Activated CD4-positive, alpha-beta memory T cell treated with anti-CD3 and anti-CD28 coated beads for 36 hours (primary cell): ENCODE measurements at regions of chr18 and their contacts with region 1.

Region 1: GRCh38 chr18:47756364-47757016 is 174.0 kb downstream of the SMAD2 start:
- DNase-seq: peak; percentile 67
- H3K4me3 Mint-ChIP-seq: no peak overlapping the region
- H3K27ac Mint-ChIP-seq: no peak overlapping the region
- H3K4me1 Mint-ChIP-seq: peaks cover 4% of the 10 kb centered on the region
- H3K27me3 Mint-ChIP-seq: peaks cover 29% of the 10 kb centered on the region

Region 2: GRCh38 chr18:47100214-47100831 is 656.2 kb before region 1 on chr18:
- CTCF ChIA-PET with region 1: no interaction called
- POLR2A ChIA-PET with region 1: no interaction called
- intact Hi-C with region 1: loop called (anchors 10 kb)
- DNase-seq: peak; percentile 75
- H3K4me3 Mint-ChIP-seq: no peak overlapping the region
- H3K27ac Mint-ChIP-seq: no peak overlapping the region
- H3K4me1 Mint-ChIP-seq: no peaks in the 10 kb centered on the region
- H3K27me3 Mint-ChIP-seq: no peaks in the 10 kb centered on the region

Region 3: DNA sequence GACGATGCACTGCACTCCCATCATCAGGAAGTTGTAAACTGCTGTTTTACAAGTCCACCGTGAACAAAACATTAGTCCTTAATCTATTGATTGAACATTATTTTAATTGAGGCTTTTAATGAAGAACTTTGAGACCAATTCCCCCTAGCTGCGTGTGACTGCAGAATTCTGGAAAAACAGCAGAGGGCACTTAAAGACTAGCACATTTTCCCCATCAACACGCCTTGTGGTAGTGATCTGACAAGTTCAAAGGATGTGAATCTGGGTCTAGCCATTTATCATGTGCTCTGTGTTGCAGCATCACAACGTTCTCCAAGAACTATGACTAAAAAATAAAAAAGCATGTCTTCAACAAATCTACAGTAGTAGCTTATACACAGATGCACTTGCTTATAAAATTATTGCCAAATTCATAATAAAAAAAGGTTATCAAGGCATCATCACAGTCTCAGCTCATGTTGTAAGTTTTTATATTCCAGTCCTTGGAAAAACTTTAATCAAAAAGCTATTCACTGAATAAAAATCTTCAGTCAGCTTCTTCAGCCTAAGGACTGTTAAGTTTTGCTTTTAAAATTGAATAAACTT is 540.8 kb before region 1 on chr18:
- CTCF ChIA-PET with region 1: interaction called, 13 read pairs
- POLR2A ChIA-PET with region 1: no interaction called
- intact Hi-C with region 1: no loop called
- DNase-seq: peak; percentile 26
- H3K4me3 Mint-ChIP-seq: no peak overlapping the region
- H3K27ac Mint-ChIP-seq: no peak overlapping the region
- H3K4me1 Mint-ChIP-seq: no peaks in the 10 kb centered on the region
- H3K27me3 Mint-ChIP-seq: peaks cover 27% of the 10 kb centered on the region

Region 4: GRCh38 chr18:47595815-47596496 is 160.5 kb before region 1 on chr18:
- CTCF ChIA-PET with region 1: no interaction called
- POLR2A ChIA-PET with region 1: no interaction called
- intact Hi-C with region 1: loop called (anchors 1 kb)
- DNase-seq: peak; percentile 26
- H3K4me3 Mint-ChIP-seq: no peak overlapping the region
- H3K27ac Mint-ChIP-seq: no peak overlapping the region
- H3K4me1 Mint-ChIP-seq: no peaks in the 10 kb centered on the region
- H3K27me3 Mint-ChIP-seq: peaks cover 8% of the 10 kb centered on the region

Region 5: DNA sequence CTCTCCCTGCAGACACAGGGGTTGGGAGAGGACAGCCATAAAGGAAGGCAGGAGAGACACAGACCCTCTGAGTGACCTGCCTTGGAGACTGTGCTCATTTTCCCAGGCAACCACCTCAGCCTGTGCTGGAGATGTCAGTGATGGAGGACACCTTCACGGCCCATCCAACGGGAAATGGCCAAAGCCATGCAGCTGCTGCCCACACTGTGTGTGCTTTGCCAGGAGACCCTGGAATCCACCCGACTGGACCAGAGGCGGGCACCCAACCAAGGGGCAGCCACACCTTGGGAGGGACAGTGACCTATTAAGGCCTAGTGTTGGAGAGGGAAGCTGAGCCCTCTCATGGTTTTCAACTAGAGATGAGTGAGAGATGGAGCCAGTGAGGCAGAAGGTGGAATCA is 18.5 kb before region 1 on chr18:
- CTCF ChIA-PET with region 1: interaction called, 12 read pairs
- POLR2A ChIA-PET with region 1: no interaction called
- intact Hi-C with region 1: no loop called
- DNase-seq: no peak
- H3K4me3 Mint-ChIP-seq: no peak overlapping the region
- H3K27ac Mint-ChIP-seq: no peak overlapping the region
- H3K4me1 Mint-ChIP-seq: no peaks in the 10 kb centered on the region
- H3K27me3 Mint-ChIP-seq: peaks cover 24% of the 10 kb centered on the region

Region 6: GRCh38 chr18:47772374-47773248 is 16.1 kb after region 1 on chr18:
- CTCF ChIA-PET with region 1: interaction called, 11 read pairs
- POLR2A ChIA-PET with region 1: no interaction called
- intact Hi-C with region 1: no loop called
- DNase-seq: peak; percentile 73
- H3K4me3 Mint-ChIP-seq: no peak overlapping the region
- H3K27ac Mint-ChIP-seq: no peak overlapping the region
- H3K4me1 Mint-ChIP-seq: no peaks in the 10 kb centered on the region
- H3K27me3 Mint-ChIP-seq: peaks cover 13% of the 10 kb centered on the region

Region 7: DNA sequence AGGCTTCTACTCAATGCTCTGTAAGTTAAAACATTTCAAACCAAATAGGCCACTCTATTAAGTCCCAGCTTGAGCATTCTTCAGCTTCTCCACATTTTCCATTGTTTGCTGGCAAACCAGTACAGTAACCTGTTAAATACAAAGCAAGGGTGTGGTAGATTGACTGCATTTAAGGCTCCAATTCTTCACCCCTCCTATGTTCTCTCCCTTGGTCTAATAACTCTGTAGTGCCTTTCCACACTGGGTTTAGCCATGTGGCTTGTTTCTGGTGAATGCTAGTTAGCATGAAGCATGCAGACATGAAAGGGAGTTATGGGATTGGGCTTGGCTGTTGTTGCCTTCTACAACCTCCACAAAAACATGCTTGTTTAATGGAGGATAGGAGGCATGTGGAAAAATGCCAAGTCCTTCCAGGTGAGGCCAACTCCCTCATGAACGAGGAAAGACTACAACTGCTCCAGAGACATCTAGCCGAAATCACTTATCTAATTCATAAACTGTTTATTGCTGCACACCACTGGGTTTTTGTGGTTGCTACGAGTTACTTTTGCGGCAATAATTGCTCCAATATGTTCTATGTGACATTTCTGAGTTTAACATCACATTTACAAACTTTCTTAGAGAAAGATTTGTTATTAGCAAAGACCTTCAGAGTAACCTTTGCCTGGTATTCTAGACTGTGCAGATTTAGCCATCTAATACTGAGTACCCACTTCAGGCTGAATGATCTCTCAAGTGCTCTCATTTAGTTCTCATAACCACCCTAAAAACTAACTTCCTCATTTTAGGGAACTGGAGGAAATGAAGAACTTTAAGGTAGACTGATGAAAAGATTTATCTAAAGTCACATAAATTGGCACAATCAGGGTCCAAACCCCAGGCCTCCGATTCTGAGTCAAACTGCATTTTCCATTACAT is 69.9 kb after region 1 on chr18:
- CTCF ChIA-PET with region 1: no interaction called
- POLR2A ChIA-PET with region 1: no interaction called
- intact Hi-C with region 1: no loop called
- DNase-seq: no peak
- H3K4me3 Mint-ChIP-seq: no peak overlapping the region
- H3K27ac Mint-ChIP-seq: no peak overlapping the region
- H3K4me1 Mint-ChIP-seq: peaks cover 6% of the 10 kb centered on the region
- H3K27me3 Mint-ChIP-seq: no peaks in the 10 kb centered on the region